CD14-positive monocyte (primary cell): ENCODE measurements at regions of chr1 and their contacts with region 1.

Region 1: DNA sequence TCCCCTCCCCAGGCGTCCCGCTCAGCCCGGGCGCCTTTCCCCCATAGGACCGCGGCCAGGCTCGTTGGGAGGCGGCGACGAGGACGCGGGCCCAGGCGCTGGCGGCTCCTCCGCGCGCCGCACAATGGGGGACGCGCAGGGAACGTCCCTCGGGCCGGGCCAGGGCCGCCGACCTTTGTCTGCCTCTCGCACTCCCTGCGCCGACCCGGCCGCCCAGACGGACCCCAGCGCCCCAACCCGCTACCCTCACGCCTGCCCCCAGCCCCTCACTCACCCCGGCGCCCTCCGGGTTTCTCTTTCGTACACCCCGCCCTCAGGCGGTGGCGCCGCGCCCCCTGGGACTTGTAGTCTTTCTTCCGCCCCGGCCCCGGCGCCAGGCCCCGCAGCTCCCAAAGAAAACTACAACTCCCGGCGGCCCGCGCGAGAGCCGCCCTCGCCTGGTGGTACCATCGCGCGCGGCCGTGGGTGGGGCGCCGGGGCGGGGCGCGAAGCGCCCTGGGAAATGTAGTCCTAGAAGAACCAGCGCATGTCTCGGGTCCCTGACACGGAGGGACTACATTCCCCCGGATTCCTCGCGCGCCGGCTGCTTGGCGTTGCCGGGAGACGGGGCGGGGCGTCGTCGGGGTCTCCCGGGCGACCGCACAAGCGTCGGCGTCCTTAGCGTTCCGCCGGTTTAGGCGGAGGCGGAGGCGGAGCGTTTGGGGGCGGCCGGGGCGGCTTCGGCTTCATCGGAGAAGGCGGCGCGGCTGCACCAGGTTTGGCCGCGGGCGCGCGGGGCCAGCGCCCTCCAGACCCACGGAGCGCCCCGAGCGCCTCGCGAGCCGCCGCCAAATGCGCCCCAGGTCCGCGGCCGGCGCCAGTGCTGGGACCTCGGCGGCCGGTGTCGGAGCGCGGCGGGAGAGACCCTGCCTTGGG is at the start of gene C1orf159:
- DNase-seq: peak; percentile 92 to 95 (median 94)
- H3K4me3 ChIP-seq: peak within 1 kb of the TSS; percentile 37 to 86 (median 84)
- H3K4me3 Mint-ChIP-seq: peak within 1 kb of the TSS; percentile 78 to 85
- H3K27ac ChIP-seq: peak within 1 kb of the TSS in 1 of 2 donors; percentile 58
- H3K27ac Mint-ChIP-seq: peak within 1 kb of the TSS in 5 of 7 donors; percentile 48 to 72 (median 65)
- H3K4me1 ChIP-seq: peaks cover 8 to 18% of the 10 kb centered on the region in 2 donors
- H3K4me1 Mint-ChIP-seq: peaks cover 13% of the 10 kb centered on the region
- H3K27me3 ChIP-seq: peaks cover 0 to 21% of the 10 kb centered on the region in 2 donors
- H3K27me3 Mint-ChIP-seq: peaks cover 34 to 48% (median 36%) of the 10 kb centered on the region in 3 donors
- CTCF ChIP-seq: no peak
- polyA plus RNA-seq, gene C1orf159: 3.0 to 18.8 (median 3.3) TPM

Region 2: GRCh38 chr1:951364-951763 is 164.7 kb before region 1 on chr1:
- intact Hi-C with region 1: no loop called
- DNase-seq: no peak
- H3K4me3 ChIP-seq: no peak overlapping the region
- H3K4me3 Mint-ChIP-seq: no peak overlapping the region
- H3K27ac ChIP-seq: no peak overlapping the region
- H3K27ac Mint-ChIP-seq: peak overlapping the region in 1 of 7 donors; percentile 19
- H3K4me1 ChIP-seq: peaks cover 0 to 17% of the 10 kb centered on the region in 2 donors
- H3K4me1 Mint-ChIP-seq: peaks cover 15% of the 10 kb centered on the region
- H3K27me3 ChIP-seq: no peaks in the 10 kb centered on the region
- H3K27me3 Mint-ChIP-seq: peaks cover 0 to 6% (median 0%) of the 10 kb centered on the region in 3 donors
- CTCF ChIP-seq: no peak

Region 3: DNA sequence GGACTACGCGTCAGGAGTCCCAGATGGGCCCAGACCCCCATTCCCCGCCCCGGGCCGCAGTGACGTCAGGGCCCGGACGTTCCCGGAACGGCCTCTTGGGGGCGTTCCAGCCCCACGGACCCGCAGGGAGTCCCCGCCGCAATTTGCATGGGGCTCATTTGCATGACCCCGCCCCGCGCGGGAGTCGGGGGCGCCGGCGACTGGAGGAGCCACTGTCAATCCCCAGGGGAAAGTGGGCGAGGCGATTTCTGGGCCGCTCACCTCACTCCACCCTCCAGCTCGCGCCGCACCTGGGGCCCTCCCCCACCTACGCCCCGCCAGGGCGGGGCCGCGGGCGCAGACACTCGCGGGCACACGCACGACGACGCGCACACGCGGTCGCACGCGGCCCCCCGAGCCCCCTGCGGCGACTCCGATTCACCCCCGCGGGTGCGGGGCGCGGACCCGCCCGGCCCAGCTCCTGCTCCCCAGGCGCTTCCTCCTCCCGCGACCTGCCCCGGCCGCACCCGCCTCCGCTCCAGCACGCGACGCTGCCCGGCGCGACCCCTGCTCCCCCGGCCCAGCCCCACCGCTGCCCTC is 82.9 kb before region 1 on chr1:
- intact Hi-C with region 1: loop called in 1 of 2 experiments (anchors 10 kb)
- DNase-seq: peak; percentile 45 to 73 (median 49)
- H3K4me3 ChIP-seq: peak overlapping the region; percentile 11 to 66 (median 21)
- H3K4me3 Mint-ChIP-seq: peak overlapping the region; percentile 39 to 72
- H3K27ac ChIP-seq: no peak overlapping the region
- H3K27ac Mint-ChIP-seq: no peak overlapping the region
- H3K4me1 ChIP-seq: peaks cover 7 to 19% of the 10 kb centered on the region in 2 donors
- H3K4me1 Mint-ChIP-seq: peaks cover 8% of the 10 kb centered on the region
- H3K27me3 ChIP-seq: peaks cover 8 to 56% of the 10 kb centered on the region in 2 donors
- H3K27me3 Mint-ChIP-seq: peaks cover 31 to 51% (median 46%) of the 10 kb centered on the region in 3 donors
- CTCF ChIP-seq: peak; percentile 90

Region 4: DNA sequence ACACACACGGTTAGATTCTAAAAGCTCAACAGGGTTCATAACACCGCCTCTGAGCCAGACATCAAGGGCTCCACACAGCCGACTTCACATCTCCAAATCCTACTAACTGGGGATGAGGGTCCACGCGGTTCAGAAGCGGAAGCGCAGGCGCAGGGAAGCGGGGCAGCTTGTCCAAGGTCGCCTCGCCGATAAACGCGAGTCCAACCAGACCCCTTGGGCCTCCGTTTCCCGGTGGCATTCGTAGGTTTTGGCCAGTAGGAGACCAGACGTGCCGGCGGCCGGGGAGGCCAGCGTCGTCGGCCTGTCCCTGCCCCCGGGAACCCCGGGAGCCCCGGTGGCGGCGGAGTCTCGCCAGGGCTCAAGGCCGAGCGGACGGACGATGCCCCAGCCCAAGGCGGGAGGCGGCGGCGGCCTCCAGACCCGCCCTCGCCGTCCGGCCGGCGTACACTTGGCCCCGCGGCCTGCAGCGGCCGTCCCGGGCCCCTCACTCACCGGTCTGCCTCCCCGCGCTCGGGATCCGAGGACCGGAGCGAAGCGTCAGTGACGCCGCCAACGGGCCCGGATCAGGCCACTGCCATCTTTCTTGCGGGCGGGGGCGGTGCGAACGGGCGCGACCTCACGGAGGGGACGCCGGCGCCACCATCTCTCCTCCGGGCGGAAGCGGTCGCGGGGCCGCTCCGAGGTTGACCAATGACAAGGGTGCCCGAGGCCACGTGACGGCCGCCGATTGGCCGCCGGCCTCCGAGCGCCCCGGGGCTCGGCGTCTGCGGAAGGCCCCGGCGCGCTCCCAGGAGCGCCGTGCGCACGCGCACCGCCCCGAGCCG is 115.6 kb after region 1 on chr1 and contains the start of gene SDF4:
- intact Hi-C with region 1: loop called (anchors 2 to 5 kb)
- DNase-seq: peak; percentile 94 to 98 (median 96)
- H3K4me3 ChIP-seq: peak within 1 kb of the TSS; percentile 86 to 88 (median 87)
- H3K4me3 Mint-ChIP-seq: peak within 1 kb of the TSS; percentile 91 to 96
- H3K27ac ChIP-seq: peak within 1 kb of the TSS; percentile 52 to 90
- H3K27ac Mint-ChIP-seq: peak within 1 kb of the TSS; percentile 81 to 96 (median 86)
- H3K4me1 ChIP-seq: peaks cover 19 to 31% of the 10 kb centered on the region in 2 donors
- H3K4me1 Mint-ChIP-seq: peaks cover 33% of the 10 kb centered on the region
- H3K27me3 ChIP-seq: no peaks in the 10 kb centered on the region
- H3K27me3 Mint-ChIP-seq: peaks cover 0 to 3% (median 0%) of the 10 kb centered on the region in 3 donors
- CTCF ChIP-seq: no peak
- polyA plus RNA-seq, gene SDF4: 81.7 to 98.9 (median 89.0) TPM

Region 5: GRCh38 chr1:1374929-1375662 is 259.1 kb after region 1 on chr1 and contains the start of gene AURKAIP1:
- intact Hi-C with region 1: loop called in 1 of 2 experiments (anchors 10 kb)
- DNase-seq: peak; percentile 100
- H3K4me3 ChIP-seq: peak within 1 kb of the TSS; percentile 82 to 92 (median 83)
- H3K4me3 Mint-ChIP-seq: peak within 1 kb of the TSS; percentile 81 to 90
- H3K27ac ChIP-seq: peak within 1 kb of the TSS; percentile 88 to 94
- H3K27ac Mint-ChIP-seq: peak within 1 kb of the TSS; percentile 95 to 99 (median 97)
- H3K4me1 ChIP-seq: peaks cover 37 to 49% of the 10 kb centered on the region in 2 donors
- H3K4me1 Mint-ChIP-seq: peaks cover 39% of the 10 kb centered on the region
- H3K27me3 ChIP-seq: no peaks in the 10 kb centered on the region
- H3K27me3 Mint-ChIP-seq: peaks cover 3 to 4% (median 3%) of the 10 kb centered on the region in 3 donors
- CTCF ChIP-seq: peak; percentile 24
- polyA plus RNA-seq, gene AURKAIP1: 59.1 to 160 (median 134) TPM